ENCODE measurements at regions of chr15 and their contacts with region 1.

Region 1: GRCh38 chr15:41544650-41545015 is 576 bp upstream of the RPAP1 start:
- DNase-seq: no peak
- H3K4me3 ChIP-seq: no peak overlapping the region
- H3K27ac ChIP-seq: no peak overlapping the region
- H3K27me3 ChIP-seq: no peaks in the 10 kb centered on the region
- CTCF ChIP-seq: no peak

Region 2: GRCh38 chr15:41506796-41507341 is 37.8 kb before region 1 on chr15:
- CTCF ChIA-PET with region 1: no interaction called
- POLR2A ChIA-PET with region 1: interaction called, 11 read pairs
- DNase-seq: no peak
- H3K4me3 ChIP-seq: no peak overlapping the region
- H3K27ac ChIP-seq: no peak overlapping the region
- H3K27me3 ChIP-seq: peaks cover 40% of the 10 kb centered on the region
- CTCF ChIP-seq: no peak

Region 3: GRCh38 chr15:41779662-41780157 is 235.1 kb after region 1 on chr15:
- CTCF ChIA-PET with region 1: no interaction called
- POLR2A ChIA-PET with region 1: no interaction called
- DNase-seq: no peak
- H3K4me3 ChIP-seq: no peak overlapping the region
- H3K27ac ChIP-seq: peak overlapping the region; percentile 59
- H3K27me3 ChIP-seq: no peaks in the 10 kb centered on the region
- CTCF ChIP-seq: no peak

Measured in AG04450 (cell line).